CD4-positive, alpha-beta T cell (primary cell): ENCODE measurements at regions of chr16 and their contacts with region 1.

Region 1: DNA sequence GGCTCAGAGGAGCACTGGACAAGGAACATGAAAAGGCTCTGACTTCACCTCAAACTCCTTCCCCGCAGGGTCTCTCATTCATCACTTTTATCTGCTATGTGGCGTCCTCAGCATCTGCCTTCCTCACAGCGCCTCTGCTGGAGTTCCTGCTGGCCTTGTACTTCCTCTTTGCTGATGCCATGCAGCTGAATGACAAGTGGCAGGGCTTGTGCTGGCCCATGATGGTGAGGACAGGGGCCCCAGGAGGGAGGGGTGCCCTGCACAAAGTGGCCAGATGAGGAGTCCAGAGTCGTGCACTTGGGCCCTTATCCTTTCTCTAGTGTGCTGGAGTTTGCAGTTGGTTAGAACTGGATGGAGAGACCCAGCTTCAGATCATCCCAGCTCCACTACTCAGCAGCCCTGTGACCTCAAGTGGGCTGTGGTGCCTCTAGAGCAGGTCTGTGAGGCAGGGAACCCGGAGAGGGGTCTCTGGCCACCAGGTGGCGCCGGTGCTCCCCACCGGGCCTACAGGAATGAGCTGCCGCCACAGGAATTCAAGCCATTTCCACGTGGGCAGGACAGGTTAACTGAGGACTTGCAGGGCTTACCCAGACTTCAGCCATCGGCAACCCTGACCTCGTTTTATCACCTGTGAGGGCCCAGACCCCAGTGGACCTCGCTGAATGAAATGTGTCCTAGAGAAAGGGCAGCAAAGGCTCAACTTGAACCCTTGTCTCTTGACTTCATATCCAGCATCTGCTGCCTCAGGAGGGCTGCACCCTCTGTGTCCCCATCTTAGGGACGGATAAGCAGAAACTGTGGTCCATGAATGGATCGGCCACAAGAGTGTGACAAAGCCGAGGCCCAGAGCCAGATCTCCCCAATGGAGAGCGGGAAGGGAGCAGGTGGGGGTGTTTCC is 4.0 kb downstream of the CMTM3 start:
- DNase-seq: peak; percentile 71 to 91 (median 80)
- ATAC-seq: peak; percentile 34
- H3K4me3 ChIP-seq: no peak overlapping the region
- H3K4me3 Mint-ChIP-seq: peak overlapping the region; percentile 47
- H3K27ac ChIP-seq: no peak overlapping the region
- H3K27ac Mint-ChIP-seq: peak overlapping the region; percentile 83
- H3K4me1 ChIP-seq: peaks cover 46% of the 10 kb centered on the region
- H3K4me1 Mint-ChIP-seq: peaks cover 39% of the 10 kb centered on the region
- H3K27me3 ChIP-seq: no peaks in the 10 kb centered on the region
- H3K27me3 Mint-ChIP-seq: no peaks in the 10 kb centered on the region
- CTCF ChIP-seq: peak; percentile 87

Region 2: GRCh38 chr16:66406534-66407221 is 201.8 kb before region 1 on chr16:
- CTCF ChIA-PET with region 1: interaction called, 15 read pairs
- POLR2A ChIA-PET with region 1: interaction called, 13 read pairs
- intact Hi-C with region 1: loop called (anchors 1 to 5 kb)
- DNase-seq: peak; percentile 75 to 93 (median 88)
- ATAC-seq: peak; percentile 72
- H3K4me3 ChIP-seq: peak overlapping the region; percentile 83
- H3K4me3 Mint-ChIP-seq: peak overlapping the region; percentile 85
- H3K27ac ChIP-seq: no peak overlapping the region
- H3K27ac Mint-ChIP-seq: peak overlapping the region; percentile 62
- H3K4me1 ChIP-seq: peaks cover 28% of the 10 kb centered on the region
- H3K4me1 Mint-ChIP-seq: peaks cover 27% of the 10 kb centered on the region
- H3K27me3 ChIP-seq: no peaks in the 10 kb centered on the region
- H3K27me3 Mint-ChIP-seq: no peaks in the 10 kb centered on the region
- CTCF ChIP-seq: peak; percentile 93

Region 3: DNA sequence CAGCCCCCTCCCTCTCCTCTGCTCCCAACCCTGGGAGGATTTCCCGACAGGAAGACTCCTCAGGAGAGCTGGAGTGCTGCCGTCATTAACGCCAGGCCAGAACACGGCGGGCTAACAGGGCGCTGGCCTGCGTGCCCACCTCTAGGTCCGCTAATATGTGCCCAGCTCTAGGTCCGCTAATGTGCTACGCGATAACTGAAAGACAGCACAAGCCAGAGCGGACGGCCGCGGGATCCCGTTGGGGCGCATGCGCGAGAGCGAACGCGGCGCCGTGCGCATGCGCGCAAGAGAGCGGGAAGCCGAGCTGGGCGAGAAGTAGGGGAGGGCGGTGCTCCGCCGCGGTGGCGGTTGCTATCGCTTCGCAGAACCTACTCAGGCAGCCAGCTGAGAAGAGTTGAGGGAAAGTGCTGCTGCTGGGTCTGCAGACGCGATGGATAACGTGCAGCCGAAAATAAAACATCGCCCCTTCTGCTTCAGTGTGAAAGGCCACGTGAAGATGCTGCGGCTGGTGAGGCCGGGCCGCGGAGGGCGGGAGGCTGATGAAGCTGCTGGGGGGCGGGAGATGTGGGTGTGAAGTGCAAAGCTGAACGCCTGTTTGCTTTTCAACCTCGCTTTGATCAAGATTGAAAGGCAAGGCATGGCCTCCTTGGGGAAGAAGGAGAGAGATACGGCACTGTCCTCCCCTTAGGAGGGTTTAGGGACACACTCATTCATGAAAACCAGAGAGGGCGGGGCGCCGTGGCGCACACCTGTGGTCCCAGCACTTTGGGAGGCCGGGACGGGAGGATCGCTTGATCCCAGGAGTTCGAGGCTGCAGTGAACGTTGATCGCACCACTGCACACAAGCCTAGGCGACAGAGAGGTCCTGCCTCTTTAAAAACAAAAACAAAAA is 56.0 kb before region 1 on chr16 and contains the start of gene CKLF:
- CTCF ChIA-PET with region 1: interaction called, 10 read pairs
- POLR2A ChIA-PET with region 1: interaction called, 37 read pairs
- intact Hi-C with region 1: loop called in 1 of 2 experiments (anchors 2 kb)
- DNase-seq: peak; percentile 81 to 97 (median 90)
- ATAC-seq: peak; percentile 68
- H3K4me3 ChIP-seq: peak within 1 kb of the TSS; percentile 85
- H3K4me3 Mint-ChIP-seq: peak within 1 kb of the TSS; percentile 92
- H3K27ac ChIP-seq: peak within 1 kb of the TSS; percentile 79 to 81
- H3K27ac Mint-ChIP-seq: peak within 1 kb of the TSS; percentile 93
- H3K4me1 ChIP-seq: peaks cover 81% of the 10 kb centered on the region
- H3K4me1 Mint-ChIP-seq: peaks cover 86% of the 10 kb centered on the region
- H3K27me3 ChIP-seq: no peaks in the 10 kb centered on the region
- H3K27me3 Mint-ChIP-seq: no peaks in the 10 kb centered on the region
- CTCF ChIP-seq: no peak
- total RNA-seq, gene CKLF: 10.6 to 14.1 TPM

Region 4: GRCh38 chr16:66578651-66579531 is 29.6 kb before region 1 on chr16 and contains the start of gene CMTM2:
- CTCF ChIA-PET with region 1: interaction called, 8 read pairs
- POLR2A ChIA-PET with region 1: interaction called, 20 read pairs
- intact Hi-C with region 1: no loop called
- DNase-seq: peak in 6 of 14 experiments; percentile 16 to 37 (median 28)
- ATAC-seq: peak; percentile 51
- H3K4me3 ChIP-seq: peak within 1 kb of the TSS; percentile 41
- H3K4me3 Mint-ChIP-seq: peak within 1 kb of the TSS; percentile 70
- H3K27ac ChIP-seq: no peak within 1 kb of the TSS
- H3K27ac Mint-ChIP-seq: no peak within 1 kb of the TSS
- H3K4me1 ChIP-seq: peaks cover 15% of the 10 kb centered on the region
- H3K4me1 Mint-ChIP-seq: peaks cover 16% of the 10 kb centered on the region
- H3K27me3 ChIP-seq: peaks cover 20 to 21% of the 10 kb centered on the region in 2 experiments
- H3K27me3 Mint-ChIP-seq: peaks cover 25% of the 10 kb centered on the region
- CTCF ChIP-seq: no peak
- total RNA-seq, gene CMTM2: not detected

Region 5: DNA sequence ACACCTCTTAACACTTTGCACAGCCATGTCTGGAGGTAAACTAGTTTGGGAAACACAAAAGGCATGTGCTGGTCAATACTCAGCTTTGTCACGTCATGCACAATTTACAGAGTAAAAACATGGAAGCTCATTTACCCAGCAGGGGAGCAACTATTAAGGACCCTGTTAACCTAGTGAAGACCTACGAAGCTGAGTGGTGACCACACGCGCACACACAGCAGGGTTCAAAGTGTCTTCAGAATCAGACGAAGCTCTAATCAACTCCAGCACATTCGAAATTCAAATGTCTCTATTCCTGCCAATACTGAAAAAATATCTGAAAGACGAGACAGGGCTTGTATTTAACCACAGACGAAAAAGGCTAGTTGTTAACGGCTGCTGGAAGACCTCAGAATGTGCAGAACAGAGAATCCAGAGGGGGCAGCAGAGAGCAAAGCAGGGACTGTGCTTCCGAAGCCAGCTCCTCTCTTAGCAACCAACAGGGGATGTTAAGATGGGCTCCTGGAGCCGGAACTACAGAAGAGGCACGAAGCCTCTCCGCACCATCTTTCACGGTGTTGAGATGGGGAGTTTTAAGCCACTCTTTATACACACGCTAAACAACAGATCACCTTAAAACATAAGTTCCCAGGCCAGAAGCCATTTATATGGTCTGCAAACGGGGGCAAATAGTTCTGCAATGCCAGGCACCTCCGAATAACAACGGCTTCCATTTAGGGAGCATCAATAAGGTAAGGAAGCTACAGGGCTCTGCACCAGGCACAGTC is 42.4 kb after region 1 on chr16:
- CTCF ChIA-PET with region 1: interaction called, 15 read pairs
- POLR2A ChIA-PET with region 1: interaction called, 7 read pairs
- intact Hi-C with region 1: loop called in 1 of 2 experiments (anchors 5 kb)
- DNase-seq: peak; percentile 62 to 91 (median 74)
- ATAC-seq: peak; percentile 100
- H3K4me3 ChIP-seq: peak overlapping the region; percentile 29
- H3K4me3 Mint-ChIP-seq: peak overlapping the region; percentile 57
- H3K27ac ChIP-seq: no peak overlapping the region
- H3K27ac Mint-ChIP-seq: no peak overlapping the region
- H3K4me1 ChIP-seq: peaks cover 6% of the 10 kb centered on the region
- H3K4me1 Mint-ChIP-seq: peaks cover 8% of the 10 kb centered on the region
- H3K27me3 ChIP-seq: peaks cover 0 to 3% of the 10 kb centered on the region in 2 experiments
- H3K27me3 Mint-ChIP-seq: no peaks in the 10 kb centered on the region
- CTCF ChIP-seq: peak; percentile 91

Region 6: DNA sequence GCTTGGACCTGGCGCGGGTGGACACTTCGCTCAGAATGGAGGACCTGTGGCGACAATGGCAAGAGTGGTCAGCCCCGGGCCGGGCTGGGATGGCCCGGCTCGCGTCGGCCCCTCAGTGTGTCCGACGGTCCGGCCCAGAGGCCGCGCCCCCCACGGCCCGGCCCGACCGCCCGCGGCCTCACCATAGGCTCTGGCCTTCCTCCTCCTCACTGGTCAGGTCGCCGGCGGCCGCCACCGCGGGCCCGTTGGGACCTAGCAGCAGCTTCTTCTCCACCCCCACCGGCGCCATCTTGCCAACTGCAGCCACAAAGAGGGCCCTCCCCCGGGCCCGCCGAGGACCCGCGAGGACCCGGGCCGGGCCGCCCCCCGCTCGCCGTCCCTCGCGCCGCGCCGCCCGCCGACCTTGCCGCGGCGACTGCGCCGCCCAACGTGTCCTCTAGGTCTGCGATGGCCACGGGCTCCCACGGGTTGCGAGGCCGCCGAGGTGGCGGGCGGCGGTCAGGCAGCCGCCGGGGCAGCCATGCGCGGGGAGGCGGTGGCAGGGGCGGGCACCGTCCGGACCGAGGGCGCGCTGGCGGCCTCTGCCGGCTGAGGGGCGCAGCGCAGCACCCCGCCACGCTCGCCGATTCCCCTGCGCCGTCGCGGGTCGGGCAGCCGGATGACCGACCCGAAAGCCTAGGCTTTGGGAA is 143.0 kb after region 1 on chr16 and contains the start of gene DYNC1LI2:
- CTCF ChIA-PET with region 1: interaction called, 5 read pairs
- POLR2A ChIA-PET with region 1: interaction called, 3 read pairs
- intact Hi-C with region 1: loop called in 1 of 2 experiments (anchors 5 kb)
- DNase-seq: peak; percentile 66 to 92 (median 78)
- ATAC-seq: peak; percentile 94
- H3K4me3 ChIP-seq: peak within 1 kb of the TSS; percentile 81
- H3K4me3 Mint-ChIP-seq: peak within 1 kb of the TSS; percentile 94
- H3K27ac ChIP-seq: peak within 1 kb of the TSS in 1 of 2 donors; percentile 66
- H3K27ac Mint-ChIP-seq: peak within 1 kb of the TSS; percentile 91
- H3K4me1 ChIP-seq: peaks cover 32% of the 10 kb centered on the region
- H3K4me1 Mint-ChIP-seq: peaks cover 37% of the 10 kb centered on the region
- H3K27me3 ChIP-seq: no peaks in the 10 kb centered on the region
- H3K27me3 Mint-ChIP-seq: peaks cover 19% of the 10 kb centered on the region
- CTCF ChIP-seq: peak; percentile 67
- total RNA-seq, gene DYNC1LI2: 81.8 to 82.4 TPM